Activated B cell treated with CpG ODN at 0.5 μM for 24 hours (primary cell): ENCODE measurements at regions of chr16 and their contacts with region 1.

Region 1: DNA sequence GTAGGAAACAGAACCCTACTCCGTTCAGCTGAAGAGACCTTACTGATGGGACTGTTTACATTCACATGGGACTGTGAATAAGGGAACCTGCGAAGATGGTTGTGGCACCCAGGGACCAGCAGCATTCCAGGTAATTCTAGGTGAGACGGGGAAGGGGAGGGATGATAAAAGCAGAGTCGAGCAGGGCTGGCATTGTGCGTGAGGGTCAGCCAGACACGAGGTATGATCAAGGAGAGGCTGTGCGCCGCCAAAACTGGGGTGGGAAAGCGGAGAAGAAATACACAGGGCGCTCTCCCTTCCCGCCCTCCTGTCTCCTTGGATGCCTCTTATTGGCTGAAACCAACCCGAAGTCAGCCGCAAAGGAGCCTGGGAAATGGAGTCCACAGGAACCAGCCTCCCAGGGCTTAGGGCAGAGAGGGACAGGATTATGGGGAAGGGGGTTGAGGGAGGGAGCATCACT is 38.4 kb upstream of the CSNK2A2 start:
- DNase-seq: peak; percentile 41
- ATAC-seq: peak; percentile 98
- H3K4me3 Mint-ChIP-seq: peak overlapping the region; percentile 86
- H3K27ac Mint-ChIP-seq: no peak overlapping the region
- H3K4me1 Mint-ChIP-seq: peaks cover 10% of the 10 kb centered on the region
- H3K27me3 Mint-ChIP-seq: peaks cover 11% of the 10 kb centered on the region
- CTCF ChIP-seq: no peak

Region 2: DNA sequence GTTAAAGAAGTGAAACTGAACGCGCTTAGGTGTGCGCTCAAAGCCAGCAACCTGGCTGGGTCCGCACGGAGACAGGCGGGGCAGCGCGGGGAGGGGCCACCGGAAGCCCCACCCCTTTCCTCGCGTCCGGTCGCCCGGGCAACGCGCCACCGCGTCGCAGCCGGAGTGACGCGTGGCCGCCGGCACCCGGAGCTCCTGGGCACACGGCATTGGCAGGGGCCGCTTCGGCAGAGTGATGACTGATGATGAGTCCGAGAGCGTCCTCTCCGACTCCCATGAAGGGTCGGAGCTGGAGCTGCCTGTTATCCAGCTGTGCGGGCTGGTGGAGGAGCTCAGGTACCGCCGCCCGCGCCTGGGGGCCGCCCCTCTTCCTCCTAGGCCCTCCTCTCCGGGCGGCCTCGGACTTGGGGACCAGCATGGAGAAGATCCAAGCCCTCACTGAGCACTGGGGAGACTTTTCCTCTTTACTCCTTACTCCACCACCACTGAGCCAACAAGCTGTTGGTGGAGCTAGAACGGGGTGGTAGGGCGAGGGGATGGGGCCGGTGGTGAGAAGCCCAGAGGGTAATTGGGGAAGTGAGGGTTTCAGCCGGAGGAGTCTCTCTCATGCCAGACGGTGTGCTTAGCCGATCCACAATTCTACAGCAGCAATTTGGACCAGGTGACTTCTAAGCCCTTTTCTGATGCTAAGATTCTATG is 13.7 kb after region 1 on chr16:
- CTCF ChIA-PET with region 1: no interaction called
- POLR2A ChIA-PET with region 1: interaction called, 3 read pairs
- intact Hi-C with region 1: loop called (anchors 1 kb)
- DNase-seq: peak; percentile 93
- ATAC-seq: peak; percentile 90
- H3K4me3 Mint-ChIP-seq: peak overlapping the region; percentile 87
- H3K27ac Mint-ChIP-seq: peak overlapping the region; percentile 71
- H3K4me1 Mint-ChIP-seq: peaks cover 28% of the 10 kb centered on the region
- H3K27me3 Mint-ChIP-seq: no peaks in the 10 kb centered on the region
- CTCF ChIP-seq: no peak

Region 3: DNA sequence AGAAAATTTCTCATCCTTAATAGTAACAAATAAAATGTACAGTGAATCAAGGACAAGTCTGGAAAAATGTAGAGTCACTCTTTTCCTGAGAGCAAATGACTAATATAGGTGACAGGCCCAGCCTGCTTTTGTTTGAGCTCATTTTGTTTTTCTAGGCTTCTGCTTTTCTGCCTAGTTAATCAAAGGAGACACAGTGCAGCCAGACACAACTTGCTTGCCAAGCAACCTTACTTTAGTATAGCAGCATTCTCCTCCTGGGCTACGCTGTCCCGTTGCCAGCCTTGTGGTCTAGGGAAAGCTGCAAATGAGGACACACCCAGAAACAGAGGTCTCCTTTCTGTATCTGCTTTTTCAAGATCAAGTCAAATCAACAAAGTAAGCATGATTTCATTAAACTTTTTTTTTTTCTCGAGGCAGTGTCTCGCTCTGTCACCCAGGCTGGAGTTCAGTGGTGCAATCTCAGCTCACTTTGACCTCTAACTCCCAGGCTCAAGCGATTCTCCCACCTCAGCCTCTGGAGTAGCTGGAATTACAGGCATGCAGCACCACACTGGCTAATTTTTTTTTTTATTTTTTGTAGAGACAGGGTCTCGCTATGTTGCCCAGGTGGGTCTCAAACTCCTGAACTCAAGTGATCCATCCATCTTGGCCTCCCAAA is 173.2 kb after region 1 on chr16:
- CTCF ChIA-PET with region 1: no interaction called
- POLR2A ChIA-PET with region 1: no interaction called
- intact Hi-C with region 1: no loop called
- DNase-seq: no peak
- ATAC-seq: no peak
- H3K4me3 Mint-ChIP-seq: no peak overlapping the region
- H3K27ac Mint-ChIP-seq: no peak overlapping the region
- H3K4me1 Mint-ChIP-seq: peaks cover 16% of the 10 kb centered on the region
- H3K27me3 Mint-ChIP-seq: no peaks in the 10 kb centered on the region
- CTCF ChIP-seq: no peak